Panc1 (cell line): ENCODE measurements at regions of chr1 and their contacts with region 1.

Region 1: GRCh38 chr1:218503102-218503501 is 158.0 kb downstream of the TGFB2 start:
- DNase-seq: no peak
- ATAC-seq: no peak
- H3K4me3 ChIP-seq: no peak overlapping the region
- H3K27ac ChIP-seq: no peak overlapping the region
- H3K4me1 ChIP-seq: peaks cover 12% of the 10 kb centered on the region; the same call in 1 of the 2 replicates
- H3K27me3 ChIP-seq: no peaks in the 10 kb centered on the region
- CTCF ChIP-seq: no peak

Region 2: DNA sequence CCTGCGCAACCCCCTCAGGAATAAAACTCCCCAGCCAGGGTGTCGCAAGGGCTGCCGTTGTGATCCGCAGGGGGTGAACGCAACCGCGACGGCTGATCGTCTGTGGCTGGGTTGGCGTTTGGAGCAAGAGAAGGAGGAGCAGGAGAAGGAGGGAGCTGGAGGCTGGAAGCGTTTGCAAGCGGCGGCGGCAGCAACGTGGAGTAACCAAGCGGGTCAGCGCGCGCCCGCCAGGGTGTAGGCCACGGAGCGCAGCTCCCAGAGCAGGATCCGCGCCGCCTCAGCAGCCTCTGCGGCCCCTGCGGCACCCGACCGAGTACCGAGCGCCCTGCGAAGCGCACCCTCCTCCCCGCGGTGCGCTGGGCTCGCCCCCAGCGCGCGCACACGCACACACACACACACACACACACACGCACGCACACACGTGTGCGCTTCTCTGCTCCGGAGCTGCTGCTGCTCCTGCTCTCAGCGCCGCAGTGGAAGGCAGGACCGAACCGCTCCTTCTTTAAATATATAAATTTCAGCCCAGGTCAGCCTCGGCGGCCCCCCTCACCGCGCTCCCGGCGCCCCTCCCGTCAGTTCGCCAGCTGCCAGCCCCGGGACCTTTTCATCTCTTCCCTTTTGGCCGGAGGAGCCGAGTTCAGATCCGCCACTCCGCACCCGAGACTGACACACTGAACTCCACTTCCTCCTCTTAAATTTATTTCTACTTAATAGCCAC is 157.3 kb before region 1 on chr1:
- CTCF ChIA-PET with region 1: no interaction called
- POLR2A ChIA-PET with region 1: interaction called, 12 read pairs
- in situ Hi-C with region 1: no loop called
- intact Hi-C with region 1: no loop called
- DNase-seq: no peak
- ATAC-seq: peak; percentile 80
- H3K4me3 ChIP-seq: peak overlapping the region; percentile 97 to 98
- H3K27ac ChIP-seq: peak overlapping the region; percentile 100
- H3K4me1 ChIP-seq: peaks cover 31% of the 10 kb centered on the region
- H3K27me3 ChIP-seq: no peaks in the 10 kb centered on the region
- CTCF ChIP-seq: no peak